ENCODE measurements at regions of chr10 and their contacts with region 1.

Region 1: DNA sequence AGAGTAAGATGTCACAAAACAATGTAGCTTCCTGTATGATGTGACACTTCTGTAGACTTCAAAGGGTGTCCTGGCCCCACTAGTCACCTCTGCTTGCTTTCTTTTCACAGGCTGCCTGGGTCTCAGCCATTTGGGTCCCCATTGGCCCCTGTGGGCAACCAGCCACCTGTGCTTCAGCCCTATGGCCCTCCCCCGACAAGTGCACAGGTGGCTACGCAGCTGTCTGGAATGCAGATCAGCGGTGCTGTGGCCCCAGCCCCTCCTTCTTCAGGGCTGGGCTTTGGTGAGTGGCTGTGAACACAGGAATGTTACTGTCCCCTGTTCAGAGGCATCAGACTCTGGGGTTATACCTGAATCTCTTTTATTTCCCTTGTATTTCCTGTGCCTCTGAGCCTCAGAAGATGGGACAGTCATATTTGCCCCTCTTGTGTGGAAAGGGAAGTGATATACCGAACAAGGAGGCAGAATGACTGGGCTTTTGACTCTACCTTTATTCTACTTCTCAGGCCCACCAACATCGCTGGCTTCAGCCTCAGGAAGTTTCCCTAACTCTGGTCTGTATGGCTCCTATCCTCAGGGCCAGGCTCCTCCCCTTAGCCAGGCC is 15.4 kb downstream of the SEC24C start:
- DNase-seq: peak in 34 of 35 experiments; percentile 40 to 83 (median 70)
- ATAC-seq: peak; percentile 74 to 91 (median 82)
- H3K4me3 ChIP-seq: no peak overlapping the region
- H3K4me3 Mint-ChIP-seq: peak overlapping the region; percentile 8 to 42 (median 32)
- H3K27ac ChIP-seq: peak overlapping the region; percentile 83
- H3K27ac Mint-ChIP-seq: peak overlapping the region; percentile 71 to 92
- H3K4me1 ChIP-seq: peaks cover 2 to 56% of the 10 kb centered on the region in 2 experiments
- H3K4me1 Mint-ChIP-seq: peaks cover 45 to 68% (median 52%) of the 10 kb centered on the region in 3 donors
- H3K27me3 ChIP-seq: no peaks in the 10 kb centered on the region
- H3K27me3 Mint-ChIP-seq: no peaks in the 10 kb centered on the region

Region 2: DNA sequence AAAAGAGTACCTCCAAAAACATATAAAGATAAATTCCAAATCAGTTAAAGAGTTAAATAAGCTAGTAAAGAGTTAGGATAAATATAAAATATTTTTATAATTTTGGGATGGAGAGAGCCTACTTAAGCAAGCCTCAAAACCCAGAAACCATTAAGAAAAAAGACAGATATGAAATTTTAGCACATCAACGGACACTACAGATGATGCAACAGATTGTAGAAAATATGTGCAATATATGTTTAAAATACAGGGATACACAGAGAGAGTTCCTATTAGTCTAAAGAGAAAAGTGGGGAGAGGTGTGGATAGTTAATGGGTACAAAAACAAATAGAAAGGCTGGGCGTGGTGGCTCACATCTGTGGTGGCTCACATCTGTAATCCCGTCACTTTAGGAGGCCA is 144.9 kb before region 1 on chr10:
- CTCF ChIA-PET with region 1: no interaction called
- POLR2A ChIA-PET with region 1: no interaction called
- DNase-seq: no peak
- ATAC-seq: no peak
- H3K4me3 ChIP-seq: no peak overlapping the region
- H3K4me3 Mint-ChIP-seq: no peak overlapping the region
- H3K27ac ChIP-seq: no peak overlapping the region
- H3K27ac Mint-ChIP-seq: no peak overlapping the region
- H3K4me1 ChIP-seq: no peaks in the 10 kb centered on the region
- H3K4me1 Mint-ChIP-seq: no peaks in the 10 kb centered on the region
- H3K27me3 ChIP-seq: no peaks in the 10 kb centered on the region
- H3K27me3 Mint-ChIP-seq: no peaks in the 10 kb centered on the region

Region 3: DNA sequence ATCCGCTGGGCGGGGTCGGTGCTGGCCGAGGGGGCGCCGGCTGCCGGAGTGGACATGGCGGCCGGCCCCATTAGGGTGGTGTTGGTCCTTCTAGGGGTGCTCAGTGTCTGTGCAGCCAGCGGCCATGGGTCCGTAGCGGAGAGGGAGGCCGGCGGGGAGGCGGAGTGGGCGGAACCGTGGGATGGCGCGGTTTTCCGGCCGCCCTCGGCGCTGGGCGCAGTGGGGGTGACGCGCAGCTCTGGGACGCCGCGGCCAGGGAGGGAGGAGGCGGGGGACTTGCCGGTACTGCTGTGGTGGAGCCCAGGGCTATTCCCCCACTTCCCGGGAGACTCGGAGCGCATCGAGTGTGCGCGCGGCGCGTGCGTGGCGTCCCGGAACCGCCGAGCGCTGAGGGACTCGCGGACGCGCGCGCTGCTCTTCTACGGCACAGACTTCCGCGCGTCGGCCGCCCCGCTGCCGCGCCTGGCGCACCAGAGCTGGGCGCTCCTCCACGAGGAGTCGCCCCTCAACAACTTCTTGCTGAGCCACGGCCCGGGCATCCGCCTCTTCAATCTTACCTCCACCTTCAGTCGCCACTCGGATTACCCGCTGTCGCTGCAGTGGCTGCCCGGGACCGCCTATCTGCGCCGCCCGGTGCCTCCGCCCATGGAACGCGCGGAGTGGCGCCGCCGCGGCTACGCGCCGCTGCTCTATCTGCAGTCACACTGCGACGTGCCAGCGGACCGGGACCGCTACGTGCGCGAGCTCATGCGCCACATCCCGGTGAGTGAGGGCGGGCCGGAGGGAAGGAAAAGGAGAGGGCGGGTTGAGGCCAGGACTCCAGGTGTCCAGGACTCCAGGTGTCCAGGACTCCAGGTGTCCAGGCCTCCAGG is 12.9 kb after region 1 on chr10:
- CTCF ChIA-PET with region 1: interaction called in 1 of 2 experiments, 6 read pairs
- POLR2A ChIA-PET with region 1: interaction called, 4 to 15 read pairs
- DNase-seq: peak; percentile 64 to 92 (median 74)
- ATAC-seq: peak; percentile 72 to 75 (median 74)
- H3K4me3 ChIP-seq: peak overlapping the region; percentile 74 to 92
- H3K4me3 Mint-ChIP-seq: peak overlapping the region; percentile 93 to 97 (median 94)
- H3K27ac ChIP-seq: peak overlapping the region; percentile 84
- H3K27ac Mint-ChIP-seq: peak overlapping the region; percentile 94 to 95
- H3K4me1 ChIP-seq: peaks cover 25 to 56% of the 10 kb centered on the region in 2 experiments
- H3K4me1 Mint-ChIP-seq: peaks cover 57 to 67% (median 65%) of the 10 kb centered on the region in 3 donors
- H3K27me3 ChIP-seq: no peaks in the 10 kb centered on the region
- H3K27me3 Mint-ChIP-seq: no peaks in the 10 kb centered on the region

Region 4: DNA sequence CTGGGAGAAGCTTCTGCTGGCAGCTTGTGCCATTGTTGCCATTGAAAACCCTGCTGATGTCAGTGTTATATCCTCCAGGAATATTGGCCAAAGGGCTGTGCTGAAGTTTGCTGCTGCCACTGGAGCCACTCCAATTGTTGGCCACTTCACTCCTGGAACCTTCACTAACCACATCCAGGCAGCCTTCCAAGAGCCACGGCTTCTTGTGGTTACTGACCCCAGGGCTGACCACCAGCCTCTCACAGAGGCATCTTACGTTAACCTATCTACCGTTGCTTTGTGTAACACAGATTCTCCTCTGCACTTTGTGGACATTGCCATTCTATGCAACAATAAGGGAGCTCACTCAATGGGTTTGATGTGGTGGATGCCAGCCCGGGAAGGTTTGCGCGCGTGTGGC is 612.1 kb after region 1 on chr10:
- CTCF ChIA-PET with region 1: no interaction called
- POLR2A ChIA-PET with region 1: no interaction called
- DNase-seq: no peak
- ATAC-seq: no peak
- H3K4me3 ChIP-seq: no peak overlapping the region
- H3K4me3 Mint-ChIP-seq: no peak overlapping the region
- H3K27ac ChIP-seq: no peak overlapping the region
- H3K27ac Mint-ChIP-seq: no peak overlapping the region
- H3K4me1 ChIP-seq: no peaks in the 10 kb centered on the region
- H3K4me1 Mint-ChIP-seq: peaks cover 0 to 7% (median 3%) of the 10 kb centered on the region in 3 donors
- H3K27me3 ChIP-seq: no peaks in the 10 kb centered on the region
- H3K27me3 Mint-ChIP-seq: no peaks in the 10 kb centered on the region

Measured in T-cell (primary cell).